Mucosa of descending colon (tissue), 3 donors: ENCODE measurements at regions of chr2 and their contacts with region 1.

Region 1: GRCh38 chr2:37414470-37414949 is 70.1 kb downstream of the QPCT start:
- DNase-seq: no peak
- ATAC-seq: peak; percentile 80
- H3K4me3 ChIP-seq: no peak overlapping the region
- H3K4me1 ChIP-seq: no peaks in the 10 kb centered on the region
- CTCF ChIP-seq: peak; percentile 61

Region 2: DNA sequence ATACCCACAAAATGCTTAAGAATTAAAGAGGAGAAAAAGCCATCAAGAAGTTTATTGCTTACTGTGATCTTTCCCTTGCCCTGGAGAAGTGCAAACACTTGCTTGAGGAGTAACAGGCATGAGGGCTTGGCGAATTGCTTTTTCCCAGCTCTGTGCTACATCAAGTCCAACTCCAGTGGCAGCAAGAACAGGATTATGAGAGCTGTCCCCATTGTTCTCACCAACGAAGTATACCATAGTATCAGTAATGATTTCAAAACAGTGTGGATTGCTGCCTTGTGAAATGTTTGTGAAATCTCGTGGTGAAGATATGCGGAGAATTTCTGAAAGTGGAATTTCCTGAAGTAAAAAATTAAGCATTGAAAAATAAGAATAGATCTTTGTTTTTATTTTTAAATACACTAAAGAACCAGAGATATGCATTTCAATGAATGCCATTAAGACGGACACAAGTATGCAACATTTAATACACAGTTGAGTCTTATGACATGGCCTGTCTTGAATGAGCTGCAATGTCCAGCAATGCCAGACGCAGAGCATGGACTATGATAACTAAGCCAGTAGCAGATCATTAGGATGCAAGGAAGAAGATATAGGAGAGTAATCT is 140.0 kb before region 1 on chr2:
- intact Hi-C with region 1: no loop called
- DNase-seq: no peak
- ATAC-seq: no peak
- H3K4me3 ChIP-seq: no peak overlapping the region
- H3K4me1 ChIP-seq: no peaks in the 10 kb centered on the region
- CTCF ChIP-seq: no peak

Region 3: GRCh38 chr2:37832590-37833197 is 418.2 kb after region 1 on chr2:
- intact Hi-C with region 1: loop called (anchors 5 kb)
- DNase-seq: peak; percentile 71 to 98 (median 89)
- ATAC-seq: peak; percentile 97
- H3K4me3 ChIP-seq: no peak overlapping the region
- H3K4me1 ChIP-seq: no peaks in the 10 kb centered on the region
- CTCF ChIP-seq: peak; percentile 51